ENCODE measurements at regions of chr18 and their contacts with region 1.

Region 1: DNA sequence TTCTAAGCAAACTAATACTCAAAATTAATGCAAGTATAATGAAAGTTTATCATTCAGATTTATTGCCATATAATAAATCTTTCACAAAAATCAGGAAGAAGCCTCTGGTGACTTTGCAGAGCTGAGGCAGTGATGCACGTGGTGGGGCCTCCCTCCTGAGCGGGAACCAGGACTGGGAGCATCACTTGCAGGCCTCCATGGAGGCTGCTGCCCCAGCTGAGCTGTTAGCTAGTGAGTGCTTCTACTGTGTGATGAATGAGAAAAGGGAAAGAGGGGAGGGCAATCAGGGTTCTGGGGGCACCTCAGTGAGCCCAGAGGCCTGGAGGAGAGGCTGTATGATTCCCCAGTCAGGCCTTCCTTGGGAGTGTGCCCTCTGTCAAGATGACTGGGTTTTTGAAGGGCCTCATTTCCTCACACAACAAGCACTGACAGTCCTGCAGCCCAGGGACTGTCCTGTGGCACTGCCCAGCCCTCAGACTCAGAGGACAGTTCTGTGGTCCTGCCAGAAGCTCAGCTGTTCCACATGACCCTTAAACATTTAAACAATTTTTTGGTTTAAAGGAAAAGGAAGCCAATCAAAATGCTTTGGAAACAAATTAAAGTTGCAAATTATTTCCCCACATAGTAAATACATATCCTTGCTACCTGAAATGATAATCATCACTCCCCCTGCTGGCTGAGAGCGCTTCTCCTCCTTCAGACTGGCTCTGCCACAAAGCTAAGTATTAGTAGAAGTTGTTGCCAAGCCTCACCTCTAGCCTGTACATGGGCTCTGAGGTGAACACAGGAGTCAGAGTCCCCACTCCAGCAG is 90.9 kb upstream of the SMAD7 start:
- DNase-seq: peak; percentile 54
- ATAC-seq: peak; percentile 49
- H3K4me3 ChIP-seq: no peak overlapping the region
- H3K4me3 Mint-ChIP-seq: no peak overlapping the region
- H3K27ac ChIP-seq: no peak overlapping the region
- H3K27ac Mint-ChIP-seq: no peak overlapping the region
- H3K4me1 ChIP-seq: no peaks in the 10 kb centered on the region
- H3K4me1 Mint-ChIP-seq: peaks cover 6% of the 10 kb centered on the region
- H3K27me3 ChIP-seq: no peaks in the 10 kb centered on the region
- H3K27me3 Mint-ChIP-seq: no peaks in the 10 kb centered on the region
- CTCF ChIP-seq: peak; percentile 57

Region 2: DNA sequence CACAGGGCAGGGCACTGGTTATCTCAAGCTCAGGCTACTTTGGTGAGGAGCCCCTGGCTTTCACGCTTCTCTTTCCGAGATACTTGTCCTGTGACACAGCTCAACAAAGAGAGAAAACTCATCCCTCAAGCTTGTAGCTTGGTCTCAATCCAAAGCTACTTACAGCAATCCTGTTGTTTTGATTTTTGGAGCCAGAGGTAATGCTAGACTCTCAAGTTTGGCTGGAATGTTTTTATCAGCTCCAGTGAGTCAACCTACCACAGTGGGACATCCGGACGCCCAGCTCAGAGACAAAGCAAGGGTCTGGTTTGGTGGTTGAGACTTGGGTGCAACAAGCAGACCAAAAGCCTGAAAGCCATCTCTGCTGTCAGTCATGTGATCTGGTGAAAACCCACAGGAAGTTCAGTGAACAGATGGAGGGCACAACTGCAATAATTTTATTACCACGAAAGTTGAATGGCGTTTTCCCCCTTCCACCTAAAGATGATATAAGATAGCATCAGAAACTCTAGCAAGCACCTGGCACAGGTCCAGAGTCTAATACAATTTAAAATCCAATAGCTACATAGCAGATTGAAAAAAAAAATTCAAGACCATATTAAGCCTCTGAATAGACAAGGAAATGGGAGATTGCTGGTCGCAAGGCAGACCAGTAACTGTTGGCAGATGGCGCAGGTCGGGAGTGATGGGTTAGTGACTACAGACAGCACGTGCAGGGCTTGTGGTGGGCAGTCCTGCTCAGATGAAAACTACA is 11.4 kb after region 1 on chr18:
- CTCF ChIA-PET with region 1: interaction called, 18 read pairs
- POLR2A ChIA-PET with region 1: no interaction called
- intact Hi-C with region 1: no loop called
- DNase-seq: peak; percentile 67
- ATAC-seq: peak; percentile 37
- H3K4me3 ChIP-seq: peak overlapping the region in 2 of 5 experiments; percentile 11 to 26
- H3K4me3 Mint-ChIP-seq: peak overlapping the region; percentile 59
- H3K27ac ChIP-seq: peak overlapping the region; percentile 32 to 35
- H3K27ac Mint-ChIP-seq: peak overlapping the region; percentile 41
- H3K4me1 ChIP-seq: peaks cover 31 to 46% of the 10 kb centered on the region in 2 donors
- H3K4me1 Mint-ChIP-seq: peaks cover 47% of the 10 kb centered on the region
- H3K27me3 ChIP-seq: no peaks in the 10 kb centered on the region
- H3K27me3 Mint-ChIP-seq: no peaks in the 10 kb centered on the region
- CTCF ChIP-seq: no peak

Region 3: DNA sequence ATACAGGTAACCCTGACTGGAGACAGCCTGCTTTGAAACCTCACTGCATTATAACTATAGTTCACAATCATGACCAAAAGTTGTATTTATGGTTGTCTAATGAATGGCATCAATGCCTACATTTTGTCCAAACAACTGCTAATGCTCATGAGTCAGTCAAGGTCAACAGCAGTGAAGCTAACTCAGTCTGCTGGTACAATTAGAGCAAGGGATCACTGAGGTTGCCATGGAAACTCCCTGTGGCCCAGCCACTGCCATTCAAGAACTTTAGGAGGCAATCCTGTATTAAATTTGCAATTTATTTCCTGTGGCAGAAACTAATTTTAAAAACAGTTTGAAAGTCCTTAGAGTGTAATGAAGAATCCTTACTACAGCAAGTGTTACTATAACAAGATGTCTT is 94.2 kb after region 1 on chr18:
- CTCF ChIA-PET with region 1: no interaction called
- POLR2A ChIA-PET with region 1: no interaction called
- intact Hi-C with region 1: no loop called
- DNase-seq: no peak
- ATAC-seq: no peak
- H3K4me3 ChIP-seq: no peak overlapping the region
- H3K4me3 Mint-ChIP-seq: no peak overlapping the region
- H3K27ac ChIP-seq: no peak overlapping the region
- H3K27ac Mint-ChIP-seq: no peak overlapping the region
- H3K4me1 ChIP-seq: no peaks in the 10 kb centered on the region
- H3K4me1 Mint-ChIP-seq: no peaks in the 10 kb centered on the region
- H3K27me3 ChIP-seq: no peaks in the 10 kb centered on the region
- H3K27me3 Mint-ChIP-seq: no peaks in the 10 kb centered on the region
- CTCF ChIP-seq: no peak

Region 4: DNA sequence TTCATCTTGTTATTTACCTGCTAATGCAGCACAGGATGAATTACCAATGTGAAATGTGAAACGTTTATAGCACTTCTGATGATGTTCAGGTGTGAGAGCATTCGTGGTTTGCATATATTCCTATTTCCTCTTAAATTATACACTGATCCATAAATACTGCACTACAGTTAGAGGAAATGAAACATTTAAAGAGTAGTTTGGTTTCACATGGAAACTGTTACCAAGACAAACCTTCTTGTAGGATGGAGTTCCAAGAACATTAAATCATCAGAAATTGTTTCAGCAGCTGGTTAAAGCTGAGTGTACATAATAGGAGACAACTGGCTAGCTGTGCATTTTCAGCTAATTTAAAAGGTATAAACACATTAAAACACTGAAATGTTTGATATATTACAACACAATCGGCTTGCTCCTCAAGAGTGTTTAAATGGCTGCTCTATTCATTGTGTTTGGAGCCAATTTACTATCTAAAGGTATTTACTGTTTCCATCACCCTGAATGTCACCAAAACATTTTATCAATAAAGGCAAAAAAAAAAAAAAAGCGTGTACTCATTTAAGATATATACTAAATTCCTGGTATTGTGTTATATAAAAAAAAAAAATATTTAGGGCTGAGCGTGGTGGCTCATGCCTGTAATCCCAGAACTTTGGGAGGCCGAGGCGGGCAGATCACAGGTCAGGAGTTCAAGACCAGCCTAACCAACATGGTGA is 318.2 kb after region 1 on chr18:
- CTCF ChIA-PET with region 1: no interaction called
- POLR2A ChIA-PET with region 1: no interaction called
- intact Hi-C with region 1: no loop called
- DNase-seq: peak; percentile 14
- ATAC-seq: no peak
- H3K4me3 ChIP-seq: no peak overlapping the region
- H3K4me3 Mint-ChIP-seq: no peak overlapping the region
- H3K27ac ChIP-seq: no peak overlapping the region
- H3K27ac Mint-ChIP-seq: no peak overlapping the region
- H3K4me1 ChIP-seq: peaks cover 0 to 6% of the 10 kb centered on the region in 2 donors
- H3K4me1 Mint-ChIP-seq: peaks cover 22% of the 10 kb centered on the region
- H3K27me3 ChIP-seq: no peaks in the 10 kb centered on the region
- H3K27me3 Mint-ChIP-seq: no peaks in the 10 kb centered on the region
- CTCF ChIP-seq: no peak

Measured in B cell (primary cell).